AG04450 (cell line): ENCODE measurements at regions of chr3 and their contacts with region 1.

Region 1: GRCh38 chr3:67384760-67385397 is 269.5 kb downstream of the SUCLG2 start:
- DNase-seq: peak; percentile 13
- H3K4me3 ChIP-seq: no peak overlapping the region
- H3K27ac ChIP-seq: no peak overlapping the region
- H3K27me3 ChIP-seq: no peaks in the 10 kb centered on the region
- CTCF ChIP-seq: peak; percentile 68

Region 2: GRCh38 chr3:66165660-66166059 is 1219.2 kb before region 1 on chr3:
- CTCF ChIA-PET with region 1: no interaction called
- POLR2A ChIA-PET with region 1: no interaction called
- DNase-seq: no peak
- H3K4me3 ChIP-seq: no peak overlapping the region
- H3K27ac ChIP-seq: no peak overlapping the region
- H3K27me3 ChIP-seq: peaks cover 18% of the 10 kb centered on the region
- CTCF ChIP-seq: no peak

Region 3: DNA sequence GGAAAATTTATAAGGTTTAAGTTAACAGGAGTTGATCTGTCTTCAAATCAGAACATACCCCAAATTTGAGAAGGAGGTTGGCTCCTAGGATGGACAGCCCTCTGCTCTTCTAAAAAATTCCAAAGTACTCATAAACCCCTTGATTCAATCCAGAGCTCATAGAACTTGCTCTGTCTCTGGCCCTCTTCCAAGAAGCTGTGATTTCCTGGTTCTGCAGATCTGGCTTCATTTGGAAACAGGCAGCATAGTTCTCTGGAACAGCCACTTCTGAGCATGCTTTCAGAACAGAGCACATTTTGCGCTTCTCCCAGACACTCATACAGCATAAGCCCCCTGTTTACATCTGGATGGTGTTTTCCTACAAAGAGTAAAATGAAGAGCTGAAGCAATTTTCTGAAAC is 290.1 kb before region 1 on chr3:
- CTCF ChIA-PET with region 1: no interaction called
- POLR2A ChIA-PET with region 1: no interaction called
- DNase-seq: no peak
- H3K4me3 ChIP-seq: no peak overlapping the region
- H3K27ac ChIP-seq: no peak overlapping the region
- H3K27me3 ChIP-seq: no peaks in the 10 kb centered on the region
- CTCF ChIP-seq: no peak

Region 4: GRCh38 chr3:67605377-67605776 is 220.5 kb after region 1 on chr3:
- CTCF ChIA-PET with region 1: interaction called, 67 read pairs
- POLR2A ChIA-PET with region 1: no interaction called
- DNase-seq: peak; percentile 50
- H3K4me3 ChIP-seq: no peak overlapping the region
- H3K27ac ChIP-seq: no peak overlapping the region
- H3K27me3 ChIP-seq: no peaks in the 10 kb centered on the region
- CTCF ChIP-seq: peak; percentile 71

Region 5: GRCh38 chr3:67662733-67663132 is 277.9 kb after region 1 on chr3:
- CTCF ChIA-PET with region 1: no interaction called
- POLR2A ChIA-PET with region 1: no interaction called
- DNase-seq: no peak
- H3K4me3 ChIP-seq: no peak overlapping the region
- H3K27ac ChIP-seq: no peak overlapping the region
- H3K27me3 ChIP-seq: no peaks in the 10 kb centered on the region
- CTCF ChIP-seq: no peak

Region 6: GRCh38 chr3:67790043-67790442 is 405.2 kb after region 1 on chr3:
- CTCF ChIA-PET with region 1: interaction called, 72 read pairs
- POLR2A ChIA-PET with region 1: no interaction called
- DNase-seq: peak; percentile 10
- H3K4me3 ChIP-seq: no peak overlapping the region
- H3K27ac ChIP-seq: no peak overlapping the region
- H3K27me3 ChIP-seq: no peaks in the 10 kb centered on the region
- CTCF ChIP-seq: peak; percentile 79

Region 7: DNA sequence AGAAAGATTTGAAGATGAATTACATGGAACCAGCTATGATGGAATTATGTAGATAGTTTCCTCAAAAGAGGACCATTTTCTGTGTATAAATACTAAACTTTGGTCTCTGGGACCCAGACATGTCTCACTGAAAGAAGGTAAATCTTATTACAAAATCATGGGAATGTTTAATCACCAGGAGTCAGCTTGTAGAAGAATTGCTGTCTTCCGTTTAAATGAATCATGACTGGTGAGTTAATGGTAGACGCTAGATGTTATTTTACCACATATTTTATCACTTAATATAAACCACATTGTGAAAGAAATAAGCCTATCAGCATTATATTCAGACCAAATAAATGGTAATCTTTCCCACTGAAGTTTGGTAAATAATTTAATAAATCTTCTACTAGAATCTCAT is 591.8 kb after region 1 on chr3:
- CTCF ChIA-PET with region 1: no interaction called
- POLR2A ChIA-PET with region 1: no interaction called
- DNase-seq: no peak
- H3K4me3 ChIP-seq: no peak overlapping the region
- H3K27ac ChIP-seq: no peak overlapping the region
- H3K27me3 ChIP-seq: no peaks in the 10 kb centered on the region
- CTCF ChIP-seq: no peak